ENCODE measurements at regions of chr1 and their contacts with region 1.

Region 1: DNA sequence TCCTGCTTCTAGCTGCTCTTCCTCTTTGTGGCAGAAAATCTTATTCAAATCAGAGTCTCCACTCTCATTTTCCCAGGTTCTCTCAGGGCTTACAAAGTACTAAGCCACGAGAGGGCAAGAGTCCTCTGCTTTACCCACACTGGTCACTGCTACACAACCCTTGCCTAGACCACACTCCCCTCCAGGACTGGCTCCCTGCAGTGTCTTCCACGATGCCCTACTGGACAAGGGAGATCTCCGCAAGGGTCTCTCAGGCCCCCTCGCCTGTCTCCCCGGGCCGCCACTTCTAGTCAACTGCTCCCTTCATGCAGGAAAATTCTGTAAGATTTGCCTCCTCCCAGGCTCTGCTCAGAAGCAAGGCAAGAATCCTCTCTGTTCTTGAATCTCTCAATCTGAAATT is 319.6 kb downstream of the RRAGC start:
- DNase-seq: no peak
- ATAC-seq: no peak

Region 2: GRCh38 chr1:38559161-38559824 is 19.4 kb after region 1 on chr1:
- intact Hi-C with region 1: loop called (anchors 2 kb)
- DNase-seq: peak; percentile 62
- ATAC-seq: peak; percentile 66

Measured in sciatic nerve (tissue), 2 donors.